Ascending aorta (tissue), 2 donors: ENCODE measurements at regions of chr9 and their contacts with region 1.

Region 1: GRCh38 chr9:16871356-16872151 is 1.1 kb upstream of the BNC2 start:
- DNase-seq: peak in 1 of 2 donors; percentile 83
- H3K4me3 ChIP-seq: peak overlapping the region; percentile 76 to 92
- H3K27ac ChIP-seq: peak overlapping the region; percentile 84 to 90
- H3K4me1 ChIP-seq: no peaks in the 10 kb centered on the region
- H3K27me3 ChIP-seq: no peaks in the 10 kb centered on the region
- CTCF ChIP-seq: no peak

Region 2: GRCh38 chr9:16309469-16310271 is 561.9 kb before region 1 on chr9:
- intact Hi-C with region 1: loop called (anchors 10 kb)
- DNase-seq: no peak
- H3K4me3 ChIP-seq: peak overlapping the region in 1 of 2 donors; percentile 2
- H3K27ac ChIP-seq: no peak overlapping the region
- H3K4me1 ChIP-seq: peaks cover 0 to 5% of the 10 kb centered on the region in 2 donors
- H3K27me3 ChIP-seq: no peaks in the 10 kb centered on the region
- CTCF ChIP-seq: no peak

Region 3: DNA sequence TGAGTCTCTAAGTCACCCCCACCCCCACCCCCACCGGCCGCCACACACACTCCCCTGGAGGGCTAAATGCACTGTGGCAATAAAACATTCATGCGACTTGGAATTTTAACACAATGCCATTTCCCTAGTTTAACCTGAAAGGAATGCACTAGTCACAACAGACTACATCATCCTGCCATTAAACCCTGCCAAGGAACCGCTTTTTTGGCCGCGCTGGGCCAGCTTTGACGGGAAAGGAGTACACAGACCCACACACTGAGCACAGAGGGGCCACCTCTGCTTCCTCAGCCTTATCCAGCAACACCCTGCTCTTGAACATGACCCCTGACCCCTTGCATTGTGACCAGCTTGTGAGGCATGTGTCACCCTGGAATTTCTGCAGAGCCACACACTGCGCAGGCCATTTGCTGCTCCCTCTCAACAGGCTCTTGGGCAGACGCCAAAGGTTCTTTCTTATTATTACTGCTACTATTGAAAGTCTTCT is 166.4 kb before region 1 on chr9:
- intact Hi-C with region 1: loop called (anchors 5 kb)
- DNase-seq: peak; percentile 56 to 97
- H3K4me3 ChIP-seq: peak overlapping the region in 1 of 2 donors; percentile 64
- H3K27ac ChIP-seq: peak overlapping the region; percentile 85 to 94
- H3K4me1 ChIP-seq: peaks cover 0 to 35% of the 10 kb centered on the region in 2 donors
- H3K27me3 ChIP-seq: no peaks in the 10 kb centered on the region
- CTCF ChIP-seq: no peak

Region 4: GRCh38 chr9:16828340-16829281 is 42.9 kb before region 1 on chr9:
- intact Hi-C with region 1: loop called (anchors 1 kb)
- DNase-seq: no peak
- H3K4me3 ChIP-seq: peak overlapping the region; percentile 43 to 62
- H3K27ac ChIP-seq: peak overlapping the region; percentile 69 to 72
- H3K4me1 ChIP-seq: peaks cover 0 to 11% of the 10 kb centered on the region in 2 donors
- H3K27me3 ChIP-seq: no peaks in the 10 kb centered on the region
- CTCF ChIP-seq: no peak

Region 5: DNA sequence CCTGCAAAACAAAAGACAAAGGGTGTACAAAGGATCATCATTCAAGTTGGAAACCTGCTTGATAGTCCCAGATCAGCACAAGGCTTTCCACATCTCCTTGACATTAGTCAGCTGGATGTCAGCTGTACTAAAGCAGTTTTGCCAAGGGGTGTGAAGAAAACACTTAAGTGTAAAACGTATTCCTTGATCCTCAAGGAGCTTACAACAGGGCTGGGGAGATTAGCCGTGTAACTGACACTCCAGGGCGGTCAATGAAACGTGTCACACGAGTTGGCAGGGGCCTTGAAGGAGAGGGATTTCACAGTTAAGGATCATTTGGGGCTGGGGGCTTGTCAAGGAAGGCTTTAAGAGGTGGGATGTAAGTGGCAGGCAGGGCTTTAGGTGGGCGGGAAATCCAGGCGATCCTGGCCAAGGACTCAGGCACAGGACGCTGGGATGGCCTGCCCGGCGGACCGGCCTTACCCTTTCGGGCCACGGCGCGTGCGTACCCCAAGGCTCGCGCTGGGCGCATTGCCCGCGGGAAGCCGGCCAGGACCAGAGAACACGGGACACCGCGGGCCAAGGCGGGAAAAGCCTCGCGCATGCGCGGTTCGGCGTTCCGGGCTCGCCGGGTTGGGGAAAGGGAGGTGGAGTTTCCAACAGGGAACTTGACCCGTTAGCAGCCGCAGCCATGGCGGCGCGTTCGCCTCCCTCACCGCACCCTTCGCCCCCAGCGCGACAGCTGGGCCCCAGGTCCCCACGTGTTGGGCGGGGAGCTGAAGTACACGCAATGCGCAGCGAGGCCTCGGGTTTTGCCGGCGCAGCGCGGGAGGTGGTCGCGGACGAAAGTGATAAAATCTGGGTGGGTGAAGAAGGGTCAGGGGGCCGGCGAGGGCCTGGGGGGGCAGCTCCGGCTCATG is 263.1 kb after region 1 on chr9 and contains the start of gene CNTLN:
- intact Hi-C with region 1: loop called (anchors 10 kb)
- DNase-seq: peak; percentile 63 to 97
- H3K4me3 ChIP-seq: peak within 1 kb of the TSS; percentile 66 to 95
- H3K27ac ChIP-seq: peak within 1 kb of the TSS; percentile 78 to 86
- H3K4me1 ChIP-seq: peaks cover 0 to 3% of the 10 kb centered on the region in 2 donors
- H3K27me3 ChIP-seq: no peaks in the 10 kb centered on the region
- CTCF ChIP-seq: no peak
- total RNA-seq, gene CNTLN: 3.5 TPM